ENCODE measurements at regions of chr5 and their contacts with region 1.

Region 1: DNA sequence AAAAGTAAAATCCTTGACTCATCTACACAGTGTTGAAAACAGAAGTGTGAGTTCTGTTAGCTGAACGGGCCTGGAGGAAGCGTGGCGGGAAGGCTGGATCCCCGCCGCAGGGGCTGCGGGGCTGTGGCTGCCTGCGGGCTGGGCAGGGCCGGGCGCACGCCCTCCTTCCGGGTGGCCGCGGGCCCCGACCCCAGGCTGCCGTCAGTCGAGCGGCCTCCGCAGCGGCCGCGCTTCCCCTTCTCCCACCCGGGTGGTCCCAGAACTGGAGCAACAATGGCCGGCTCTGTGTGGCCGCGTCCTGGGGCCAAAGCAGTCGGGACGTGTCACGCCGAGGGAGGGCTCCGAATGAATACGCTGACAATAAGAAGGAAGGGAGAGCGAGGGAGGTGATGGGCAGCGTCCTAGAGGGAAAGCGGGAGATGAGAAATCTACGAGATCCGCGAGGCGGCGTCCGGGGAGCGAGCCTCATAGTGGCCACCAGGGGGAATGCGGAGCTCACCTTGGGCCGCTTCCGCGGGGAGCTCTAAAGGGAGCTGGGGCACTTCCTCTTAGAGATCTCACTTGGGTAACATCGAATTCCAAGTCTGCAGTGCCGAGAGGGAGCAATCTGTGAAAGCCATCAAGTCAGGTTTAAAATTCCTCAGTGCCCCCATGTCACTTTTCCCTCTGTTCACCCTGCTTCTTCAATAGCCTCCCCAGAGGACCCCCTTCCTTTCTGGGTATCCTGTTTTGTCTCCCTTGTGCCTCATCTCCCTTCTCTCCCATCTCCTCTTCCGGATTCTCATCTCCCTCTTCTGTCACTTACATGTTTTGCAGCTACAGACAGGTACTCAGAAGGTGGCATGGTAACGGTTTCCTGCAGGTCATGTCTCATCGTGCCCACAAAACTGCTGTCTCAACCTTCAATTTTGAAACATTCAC is 83.9 kb downstream of the SLC1A3 start:
- DNase-seq: peak; percentile 69
- H3K4me3 ChIP-seq: peak overlapping the region; percentile 42 to 48
- H3K27ac ChIP-seq: peak overlapping the region; percentile 68 to 83
- H3K4me1 ChIP-seq: no peaks in the 10 kb centered on the region
- H3K27me3 ChIP-seq: no peaks in the 10 kb centered on the region
- CTCF ChIP-seq: peak; percentile 52 to 87 (median 68)
- POLR2A ChIP-seq: no peak

Region 2: DNA sequence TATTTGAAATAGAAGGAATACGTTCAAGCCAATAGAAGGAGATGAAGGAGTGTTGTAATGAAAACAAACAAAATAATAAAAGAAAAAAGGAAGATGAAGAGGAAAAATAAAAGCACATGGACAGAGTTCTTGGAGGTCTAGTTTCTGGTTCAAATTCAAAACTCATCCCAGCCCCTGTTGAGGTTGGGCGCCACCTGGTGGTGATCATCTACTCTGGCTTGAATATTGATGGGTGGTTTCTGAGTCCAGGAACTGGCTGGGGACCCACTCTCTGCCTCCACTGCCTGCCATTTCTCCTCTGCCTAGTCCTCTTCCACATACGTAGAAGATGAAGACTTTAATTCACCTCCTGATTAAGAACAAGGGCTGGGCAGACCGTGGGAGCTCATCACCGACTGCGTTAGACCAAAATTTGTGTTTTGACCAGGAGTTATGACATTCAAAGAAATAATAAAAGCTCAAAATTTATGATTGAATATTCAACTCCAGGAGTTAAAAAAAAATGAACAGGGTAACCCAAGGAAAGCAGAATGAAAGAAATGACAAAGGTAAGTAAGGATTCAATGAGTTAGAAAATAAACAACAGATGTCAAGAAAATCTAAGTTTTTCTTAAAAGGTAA is 182.9 kb before region 1 on chr5:
- intact Hi-C with region 1: loop called (anchors 10 kb)
- DNase-seq: peak; percentile 78
- H3K4me3 ChIP-seq: no peak overlapping the region
- H3K27ac ChIP-seq: no peak overlapping the region
- H3K4me1 ChIP-seq: no peaks in the 10 kb centered on the region
- H3K27me3 ChIP-seq: no peaks in the 10 kb centered on the region
- CTCF ChIP-seq: peak; percentile 54 to 90 (median 76)
- POLR2A ChIP-seq: no peak